Activated T-helper 2 cell treated with anti-CD3 and anti-CD28 coated beads, Interferon-gamma antibody, Interleukin-2, Interleukin-4, amounts not matched to agents 10 μg/mL and 5 μg/mL and 100 μg/mL, durations not matched to agents 14 hours and 24 hours and 36 hours (primary cell): ENCODE measurements at regions of chr1 and their contacts with region 1.

Region 1: DNA sequence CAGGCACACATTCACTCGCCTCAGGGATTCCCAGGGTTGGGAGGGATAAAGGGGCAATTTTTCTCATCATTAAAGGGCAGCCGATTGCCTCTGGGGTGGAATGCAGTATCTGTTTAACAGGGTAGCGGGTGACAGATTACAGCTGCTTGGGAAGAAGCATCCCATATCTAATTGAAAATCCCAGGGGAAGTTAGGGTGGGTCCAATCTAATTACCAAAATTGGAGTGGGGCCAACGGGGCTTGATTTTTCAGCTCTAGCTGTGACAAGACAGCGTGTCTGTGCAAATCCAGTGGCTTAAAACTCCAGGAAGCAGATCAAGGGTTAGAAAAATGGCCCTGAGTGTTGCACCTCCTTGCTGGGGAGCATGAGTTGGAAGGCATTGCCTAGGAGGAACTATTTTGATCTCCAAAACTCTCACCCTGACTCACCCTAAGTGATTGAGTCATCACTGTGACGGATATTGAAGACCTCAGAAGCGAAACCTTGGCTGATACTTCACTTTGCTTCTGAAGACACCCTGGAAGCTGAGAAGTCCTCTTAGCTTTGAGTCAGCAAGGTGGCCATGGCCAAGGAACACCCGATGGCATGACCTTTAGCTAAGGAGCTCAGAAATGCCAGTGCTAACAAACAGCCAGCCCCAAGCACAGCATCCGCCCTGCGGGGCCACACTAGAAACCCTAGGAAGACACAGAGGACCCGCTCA is 46.0 kb downstream of the GRHL3 start:
- DNase-seq: peak; percentile 23
- H3K4me3 Mint-ChIP-seq: no peak overlapping the region
- H3K27ac Mint-ChIP-seq: peak overlapping the region; percentile 74
- H3K4me1 Mint-ChIP-seq: peaks cover 23% of the 10 kb centered on the region
- H3K27me3 Mint-ChIP-seq: no peaks in the 10 kb centered on the region

Region 2: GRCh38 chr1:24321697-24322469 is 43.2 kb before region 1 on chr1:
- intact Hi-C with region 1: loop called (anchors 1 kb)
- DNase-seq: peak; percentile 82
- H3K4me3 Mint-ChIP-seq: peak overlapping the region; percentile 67
- H3K27ac Mint-ChIP-seq: peak overlapping the region; percentile 43
- H3K4me1 Mint-ChIP-seq: peaks cover 26% of the 10 kb centered on the region
- H3K27me3 Mint-ChIP-seq: peaks cover 86% of the 10 kb centered on the region

Region 3: DNA sequence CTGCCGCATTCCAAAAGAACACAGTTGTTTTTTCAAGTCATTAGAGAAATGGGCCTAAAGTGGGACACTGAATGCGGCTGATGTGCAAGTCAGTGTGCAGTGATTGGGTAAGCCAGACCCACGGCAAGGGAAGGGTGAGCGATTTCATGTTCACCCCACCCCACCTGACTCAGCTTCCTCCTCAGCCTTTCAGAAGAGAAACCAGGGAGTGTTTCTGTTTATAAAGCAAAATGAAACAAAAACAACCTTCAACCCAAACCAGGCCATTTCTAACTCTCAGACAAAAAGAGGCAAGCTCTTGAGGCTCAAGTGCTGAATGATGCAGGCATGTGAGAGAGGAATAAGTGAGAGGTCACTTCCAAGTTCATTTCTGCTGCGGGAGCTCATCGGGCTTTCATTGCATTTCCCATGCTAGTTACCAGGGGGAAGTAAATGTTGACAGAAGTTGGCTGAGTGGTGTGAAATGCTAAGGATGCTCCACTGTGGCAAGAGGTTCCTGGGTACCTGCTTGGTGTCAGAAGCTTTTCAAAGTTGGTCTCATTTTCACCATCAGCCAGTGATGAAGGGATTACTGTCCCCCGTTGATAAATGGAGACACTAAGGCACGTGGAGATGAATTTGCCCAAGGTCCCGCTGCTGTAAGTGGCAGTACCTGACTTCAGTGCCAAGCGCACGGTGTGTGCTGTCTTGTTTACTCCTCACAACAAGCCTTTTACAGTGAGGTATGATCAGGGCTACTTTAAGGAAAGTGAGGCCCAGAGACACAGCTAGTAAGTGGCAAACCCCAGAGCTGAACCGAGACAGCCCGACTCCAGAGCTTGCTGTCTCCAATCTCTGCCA is 19.3 kb after region 1 on chr1:
- intact Hi-C with region 1: loop called (anchors 1 kb)
- DNase-seq: peak; percentile 28
- H3K4me3 Mint-ChIP-seq: peak overlapping the region; percentile 3
- H3K27ac Mint-ChIP-seq: peak overlapping the region; percentile 71
- H3K4me1 Mint-ChIP-seq: peaks cover 26% of the 10 kb centered on the region
- H3K27me3 Mint-ChIP-seq: no peaks in the 10 kb centered on the region